ENCODE measurements at regions of chr7 and their contacts with region 1.

Region 1: DNA sequence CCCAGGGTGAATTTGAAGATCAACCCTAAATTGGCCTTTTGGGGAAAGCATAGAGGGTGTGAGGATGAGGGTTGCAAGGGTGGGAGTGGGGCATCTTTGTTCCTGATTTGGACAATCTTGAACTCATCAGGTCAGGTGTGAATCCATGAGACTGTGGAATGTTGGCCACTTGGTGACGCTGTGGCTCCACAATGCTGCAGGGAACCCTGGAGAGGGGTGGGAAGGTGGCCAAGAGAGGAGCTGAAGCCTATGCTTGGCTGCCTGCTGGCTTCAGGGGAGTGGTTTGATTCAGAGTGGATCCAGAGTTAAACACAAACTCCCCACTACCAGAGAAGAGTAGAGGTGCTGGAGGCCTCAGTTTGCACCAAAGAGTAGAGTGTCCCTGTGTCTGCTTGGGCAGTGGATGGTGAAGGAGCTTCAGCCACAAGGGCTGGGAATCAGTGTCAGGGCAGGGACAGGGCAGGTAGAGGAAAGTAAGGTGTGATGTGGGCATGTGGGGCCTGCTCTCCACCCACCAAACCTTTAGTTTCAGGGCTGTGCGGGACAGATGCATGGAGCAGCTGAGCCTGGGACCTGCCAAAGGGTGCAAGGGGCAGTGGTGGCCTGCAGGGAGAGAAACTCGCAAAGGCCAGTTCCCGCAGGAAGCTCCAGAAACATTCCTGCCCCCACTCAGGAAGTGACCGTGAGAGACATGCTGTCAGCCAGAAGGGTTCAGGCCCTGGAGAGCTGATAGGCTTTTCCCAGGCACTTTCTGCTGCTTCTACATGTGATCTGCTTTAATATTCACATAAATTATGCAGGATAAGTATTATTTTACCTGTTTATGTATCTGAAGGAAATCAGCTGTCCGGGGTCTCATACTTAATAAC is 81.0 kb upstream of the PRSS58 start:
- DNase-seq: peak in 2 of 4 experiments; percentile 30 to 42
- ATAC-seq: peak; percentile 95
- H3K4me3 ChIP-seq: no peak overlapping the region
- H3K27ac ChIP-seq: no peak overlapping the region
- H3K4me1 ChIP-seq: no peaks in the 10 kb centered on the region
- H3K27me3 ChIP-seq: no peaks in the 10 kb centered on the region
- CTCF ChIP-seq: peak; percentile 53 to 70 (median 57)
- EP300 ChIP-seq: no peak
- POLR2A ChIP-seq: no peak
- RAD21 ChIP-seq: no peak

Region 2: DNA sequence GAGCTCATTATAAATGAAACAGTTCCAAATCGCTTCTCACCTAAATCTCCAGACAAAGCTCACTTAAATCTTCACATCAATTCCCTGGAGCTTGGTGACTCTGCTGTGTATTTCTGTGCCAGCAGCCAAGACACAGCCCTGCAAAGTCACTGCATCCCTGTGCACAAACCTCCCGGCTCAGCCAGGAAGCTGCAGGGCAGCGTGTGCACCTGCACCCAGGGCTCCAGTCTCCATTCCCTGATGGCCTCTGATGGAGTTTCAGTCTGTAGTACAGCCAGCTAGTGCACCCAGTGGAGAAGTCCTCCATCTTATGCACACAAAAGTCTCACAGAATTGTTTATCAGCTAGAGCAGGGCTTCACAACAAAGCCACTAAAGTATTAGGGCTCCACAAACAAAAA is 29.9 kb before region 1 on chr7:
- CTCF ChIA-PET with region 1: no interaction called
- POLR2A ChIA-PET with region 1: no interaction called
- in situ Hi-C with region 1: no loop called
- intact Hi-C with region 1: loop called (anchors 1 kb)
- DNase-seq: no peak
- ATAC-seq: no peak
- H3K4me3 ChIP-seq: no peak overlapping the region
- H3K27ac ChIP-seq: no peak overlapping the region
- H3K4me1 ChIP-seq: no peaks in the 10 kb centered on the region
- H3K27me3 ChIP-seq: no peaks in the 10 kb centered on the region; a peak in 1 of 5 replicates
- CTCF ChIP-seq: no peak
- EP300 ChIP-seq: no peak
- POLR2A ChIP-seq: no peak
- RAD21 ChIP-seq: no peak

Measured in K562 (cell line).